Esophagus squamous epithelium (tissue), 5 donors: ENCODE measurements at regions of chr1 and their contacts with region 1.

Region 1: DNA sequence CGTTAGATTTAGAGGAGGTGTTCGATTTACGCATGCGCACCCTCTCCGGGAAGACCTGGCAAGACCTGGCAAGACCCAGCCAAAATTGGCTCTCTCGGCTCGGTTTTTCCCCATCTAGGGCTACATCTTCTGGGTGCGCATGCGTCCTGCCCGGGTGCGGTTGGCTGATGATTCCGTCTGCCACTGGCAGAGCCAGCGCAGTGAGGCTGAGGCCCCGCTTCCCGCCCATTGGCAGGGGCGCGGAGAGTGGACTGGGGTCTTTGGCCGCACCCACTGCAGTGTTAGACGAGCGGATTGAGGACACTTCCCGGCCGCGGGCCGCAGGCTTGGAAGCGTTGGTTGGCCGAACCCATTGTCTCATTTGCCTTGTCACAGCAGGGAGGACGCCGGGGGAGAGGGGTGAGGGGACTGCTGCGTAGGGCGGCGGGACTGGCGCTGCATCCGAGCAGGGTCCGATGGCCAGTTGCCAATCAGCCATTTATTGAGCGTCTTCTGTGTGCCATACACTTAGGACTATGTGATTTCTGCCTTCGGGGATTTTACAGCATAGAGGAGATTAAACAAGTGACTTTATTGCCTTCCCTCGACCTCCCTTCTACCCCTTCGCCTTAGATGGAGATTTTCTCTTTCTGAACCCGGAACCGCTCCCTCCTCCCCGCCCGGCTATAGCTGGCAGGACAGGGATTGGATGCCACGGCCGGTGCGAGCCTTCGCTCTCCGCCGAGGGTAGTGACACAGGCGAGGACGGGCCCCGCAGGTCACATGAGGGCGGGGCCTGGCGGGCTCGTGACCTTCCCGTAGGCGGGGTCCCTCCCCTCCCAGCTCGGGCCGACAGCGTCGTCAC is 43.7 kb downstream of the MEF2D start:
- DNase-seq: peak; percentile 80
- H3K4me3 ChIP-seq: peak overlapping the region; percentile 42 to 77 (median 72)
- H3K27ac ChIP-seq: peak overlapping the region; percentile 93 to 100 (median 100)
- H3K4me1 ChIP-seq: peaks cover 4 to 31% (median 10%) of the 10 kb centered on the region in 3 donors
- H3K27me3 ChIP-seq: no peaks in the 10 kb centered on the region
- CTCF ChIP-seq: no peak
- POLR2A ChIP-seq: peak in 3 of 4 donors; percentile 81 to 91 (median 91)

Region 2: GRCh38 chr1:156499842-156500546 is 43.1 kb after region 1 on chr1:
- intact Hi-C with region 1: loop called (anchors 5 kb)
- DNase-seq: no peak
- H3K4me3 ChIP-seq: peak overlapping the region; percentile 84 to 99 (median 92)
- H3K27ac ChIP-seq: peak overlapping the region; percentile 99 to 100 (median 100)
- H3K4me1 ChIP-seq: peaks cover 67 to 84% (median 78%) of the 10 kb centered on the region in 3 donors
- H3K27me3 ChIP-seq: no peaks in the 10 kb centered on the region
- CTCF ChIP-seq: no peak
- POLR2A ChIP-seq: no peak

Region 3: GRCh38 chr1:156601122-156601830 is 144.4 kb after region 1 on chr1 and contains the start of gene GPATCH4:
- intact Hi-C with region 1: loop called (anchors 5 kb)
- DNase-seq: no peak
- H3K4me3 ChIP-seq: peak within 1 kb of the TSS; percentile 55 to 80 (median 68)
- H3K27ac ChIP-seq: peak within 1 kb of the TSS; percentile 71 to 87 (median 84)
- H3K4me1 ChIP-seq: peaks cover 17 to 31% (median 25%) of the 10 kb centered on the region in 3 donors
- H3K27me3 ChIP-seq: no peaks in the 10 kb centered on the region
- CTCF ChIP-seq: no peak
- POLR2A ChIP-seq: no peak
- total RNA-seq, gene GPATCH4: 14.0 to 41.8 (median 25.0) TPM